ENCODE measurements at regions of chr10 and their contacts with region 1.

Region 1: DNA sequence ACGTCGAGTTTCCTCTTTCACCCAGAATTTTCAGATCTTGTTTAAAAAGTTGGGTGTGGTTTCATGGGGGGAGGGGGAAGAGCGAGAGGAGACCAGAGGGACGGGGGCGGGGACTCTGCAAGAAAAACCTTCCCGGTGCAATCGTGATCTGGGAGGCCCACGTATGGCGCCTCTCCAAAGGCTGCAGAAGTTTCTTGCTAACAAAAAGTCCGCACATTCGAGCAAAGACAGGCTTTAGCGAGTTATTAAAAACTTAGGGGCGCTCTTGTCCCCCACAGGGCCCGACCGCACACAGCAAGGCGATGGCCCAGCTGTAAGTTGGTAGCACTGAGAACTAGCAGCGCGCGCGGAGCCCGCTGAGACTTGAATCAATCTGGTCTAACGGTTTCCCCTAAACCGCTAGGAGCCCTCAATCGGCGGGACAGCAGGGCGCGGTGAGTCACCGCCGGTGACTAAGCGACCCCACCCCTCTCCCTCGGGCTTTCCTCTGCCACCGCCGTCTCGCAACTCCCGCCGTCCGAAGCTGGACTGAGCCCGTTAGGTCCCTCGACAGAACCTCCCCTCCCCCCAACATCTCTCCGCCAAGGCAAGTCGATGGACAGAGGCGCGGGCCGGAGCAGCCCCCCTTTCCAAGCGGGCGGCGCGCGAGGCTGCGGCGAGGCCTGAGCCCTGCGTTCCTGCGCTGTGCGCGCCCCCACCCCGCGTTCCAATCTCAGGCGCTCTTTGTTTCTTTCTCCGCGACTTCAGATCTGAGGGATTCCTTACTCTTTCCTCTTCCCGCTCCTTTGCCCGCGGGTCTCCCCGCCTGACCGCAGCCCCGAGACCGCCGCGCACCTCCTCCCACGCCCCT is at the start of gene VIM:
- DNase-seq: peak; percentile 84
- ATAC-seq: peak; percentile 76
- H3K4me3 ChIP-seq: peak within 1 kb of the TSS; percentile 24 to 43
- H3K27ac ChIP-seq: peak within 1 kb of the TSS; percentile 53
- H3K4me1 ChIP-seq: peaks cover 32 to 37% of the 10 kb centered on the region in 2 experiments
- H3K27me3 ChIP-seq: peaks cover 39% of the 10 kb centered on the region
- CTCF ChIP-seq: no peak
- POLR2A ChIP-seq: no peak
- RAD21 ChIP-seq: peak; percentile 20; the same call in 1 of the 2 replicates
- total RNA-seq, gene VIM: 7.2 TPM

Region 2: GRCh38 chr10:17062955-17063484 is 165.3 kb before region 1 on chr10:
- CTCF ChIA-PET with region 1: interaction called, 3 read pairs
- POLR2A ChIA-PET with region 1: no interaction called
- RAD21 ChIA-PET with region 1: no interaction called
- intact Hi-C with region 1: loop called (anchors 10 kb)
- DNase-seq: peak; percentile 86
- ATAC-seq: peak; percentile 95
- H3K4me3 ChIP-seq: peak overlapping the region; percentile 18 to 42
- H3K27ac ChIP-seq: peak overlapping the region; percentile 4; the same call in 1 of the 2 replicates
- H3K4me1 ChIP-seq: peaks cover 37 to 48% of the 10 kb centered on the region in 2 experiments
- H3K27me3 ChIP-seq: no peaks in the 10 kb centered on the region
- CTCF ChIP-seq: no peak
- POLR2A ChIP-seq: no peak
- RAD21 ChIP-seq: peak; percentile 22

Region 3: DNA sequence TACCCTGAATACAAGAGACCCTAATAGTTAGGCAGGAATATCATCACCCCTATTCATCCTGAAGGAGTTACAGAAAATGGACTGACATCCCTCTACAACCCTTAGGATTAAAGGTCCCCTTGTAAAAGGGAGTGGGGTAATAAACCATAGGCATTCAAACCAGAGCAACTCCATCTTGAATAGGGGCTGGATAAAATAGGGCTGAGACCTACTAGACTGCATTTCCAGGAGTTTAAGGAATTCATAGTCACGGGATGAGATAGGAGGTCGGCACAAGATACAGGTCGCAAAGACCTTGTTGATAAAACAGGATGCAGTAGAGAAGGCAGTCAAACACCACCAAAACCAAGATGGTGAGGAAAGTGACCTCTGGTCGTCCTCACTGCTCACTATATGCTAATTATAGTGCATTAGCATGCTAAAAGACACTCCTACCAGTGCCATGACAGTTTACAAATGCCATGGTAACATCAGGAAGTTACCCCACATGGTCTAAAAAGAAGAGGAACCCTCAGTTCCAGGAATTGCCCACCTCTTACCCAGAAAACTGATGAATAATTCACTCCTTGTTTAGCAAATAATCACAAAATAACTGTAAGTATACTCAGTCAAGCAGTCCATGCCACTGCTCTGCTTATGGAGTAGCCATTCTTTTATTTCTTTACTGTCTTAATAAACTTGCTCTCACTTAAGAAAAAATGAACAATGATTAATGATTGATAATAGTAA is 135.9 kb before region 1 on chr10:
- CTCF ChIA-PET with region 1: no interaction called
- POLR2A ChIA-PET with region 1: no interaction called
- RAD21 ChIA-PET with region 1: no interaction called
- intact Hi-C with region 1: no loop called
- DNase-seq: no peak
- ATAC-seq: no peak
- H3K4me3 ChIP-seq: no peak overlapping the region
- H3K27ac ChIP-seq: no peak overlapping the region
- H3K4me1 ChIP-seq: no peaks in the 10 kb centered on the region
- H3K27me3 ChIP-seq: no peaks in the 10 kb centered on the region
- CTCF ChIP-seq: no peak
- POLR2A ChIP-seq: no peak
- RAD21 ChIP-seq: no peak

Region 4: GRCh38 chr10:17200912-17201793 is 27.2 kb before region 1 on chr10 and contains the start of gene TRDMT1:
- CTCF ChIA-PET with region 1: interaction called, 12 read pairs
- POLR2A ChIA-PET with region 1: no interaction called
- RAD21 ChIA-PET with region 1: no interaction called
- intact Hi-C with region 1: loop called (anchors 1 kb)
- DNase-seq: peak; percentile 69
- ATAC-seq: peak; percentile 99
- H3K4me3 ChIP-seq: peak within 1 kb of the TSS; percentile 68 to 85
- H3K27ac ChIP-seq: peak within 1 kb of the TSS; percentile 74
- H3K4me1 ChIP-seq: peaks cover 5 to 14% of the 10 kb centered on the region in 2 experiments
- H3K27me3 ChIP-seq: no peaks in the 10 kb centered on the region
- CTCF ChIP-seq: peak in 1 of 3 experiments; percentile 17; a peak in 1 of 6 replicates
- POLR2A ChIP-seq: peak; percentile 65
- RAD21 ChIP-seq: peak; percentile 54; the same call in 1 of the 2 replicates
- total RNA-seq, gene TRDMT1: 8.6 TPM